Activated CD4-positive, alpha-beta memory T cell treated with anti-CD3 and anti-CD28 coated beads, Interleukin-2, amount 10 ng/mL, durations not matched to agents 7 days and 5 days (primary cell): ENCODE measurements at regions of chr4 and their contacts with region 1.

Region 1: GRCh38 chr4:986879-987623 is at the start of gene IDUA:
- DNase-seq: peak; percentile 87
- H3K4me3 Mint-ChIP-seq: peak within 1 kb of the TSS; percentile 83
- H3K27ac Mint-ChIP-seq: peak within 1 kb of the TSS; percentile 62
- H3K4me1 Mint-ChIP-seq: peaks cover 28% of the 10 kb centered on the region
- H3K27me3 Mint-ChIP-seq: no peaks in the 10 kb centered on the region
- total RNA-seq, gene IDUA: 18.8 to 19.0 TPM

Region 2: GRCh38 chr4:742742-743311 is 244.2 kb before region 1 on chr4:
- CTCF ChIA-PET with region 1: interaction called, 18 read pairs
- POLR2A ChIA-PET with region 1: no interaction called
- DNase-seq: peak; percentile 78
- H3K4me3 Mint-ChIP-seq: no peak overlapping the region
- H3K27ac Mint-ChIP-seq: no peak overlapping the region
- H3K4me1 Mint-ChIP-seq: peaks cover 3% of the 10 kb centered on the region
- H3K27me3 Mint-ChIP-seq: no peaks in the 10 kb centered on the region

Region 3: GRCh38 chr4:856225-856901 is 130.7 kb before region 1 on chr4:
- CTCF ChIA-PET with region 1: no interaction called
- POLR2A ChIA-PET with region 1: no interaction called
- DNase-seq: no peak
- H3K4me3 Mint-ChIP-seq: no peak overlapping the region
- H3K27ac Mint-ChIP-seq: peak overlapping the region; percentile 78
- H3K4me1 Mint-ChIP-seq: peaks cover 8% of the 10 kb centered on the region
- H3K27me3 Mint-ChIP-seq: no peaks in the 10 kb centered on the region

Region 4: GRCh38 chr4:931960-932712 is 54.9 kb before region 1 on chr4 and contains the starts of genes GAK and TMEM175:
- CTCF ChIA-PET with region 1: interaction called, 3 read pairs
- POLR2A ChIA-PET with region 1: interaction called, 14 read pairs
- DNase-seq: peak; percentile 98
- H3K4me3 Mint-ChIP-seq: peak within 1 kb of the TSS; percentile 92
- H3K27ac Mint-ChIP-seq: peak within 1 kb of the TSS; percentile 94
- H3K4me1 Mint-ChIP-seq: peaks cover 47% of the 10 kb centered on the region
- H3K27me3 Mint-ChIP-seq: no peaks in the 10 kb centered on the region
- total RNA-seq, gene GAK: 139 to 156 TPM
- total RNA-seq, gene TMEM175: 24.1 to 28.8 TPM

Region 5: GRCh38 chr4:973431-974397 is 13.3 kb before region 1 on chr4 and contains the start of gene DGKQ:
- CTCF ChIA-PET with region 1: no interaction called
- POLR2A ChIA-PET with region 1: no interaction called
- DNase-seq: peak; percentile 90
- H3K4me3 Mint-ChIP-seq: peak within 1 kb of the TSS; percentile 56
- H3K27ac Mint-ChIP-seq: no peak within 1 kb of the TSS
- H3K4me1 Mint-ChIP-seq: peaks cover 6% of the 10 kb centered on the region
- H3K27me3 Mint-ChIP-seq: no peaks in the 10 kb centered on the region
- total RNA-seq, gene DGKQ: 13.8 to 14.7 TPM

Region 6: GRCh38 chr4:997375-998071 is 10.5 kb after region 1 on chr4:
- CTCF ChIA-PET with region 1: no interaction called
- POLR2A ChIA-PET with region 1: no interaction called
- DNase-seq: no peak
- H3K4me3 Mint-ChIP-seq: no peak overlapping the region
- H3K27ac Mint-ChIP-seq: no peak overlapping the region
- H3K4me1 Mint-ChIP-seq: no peaks in the 10 kb centered on the region
- H3K27me3 Mint-ChIP-seq: peaks cover 35% of the 10 kb centered on the region

Region 7: DNA sequence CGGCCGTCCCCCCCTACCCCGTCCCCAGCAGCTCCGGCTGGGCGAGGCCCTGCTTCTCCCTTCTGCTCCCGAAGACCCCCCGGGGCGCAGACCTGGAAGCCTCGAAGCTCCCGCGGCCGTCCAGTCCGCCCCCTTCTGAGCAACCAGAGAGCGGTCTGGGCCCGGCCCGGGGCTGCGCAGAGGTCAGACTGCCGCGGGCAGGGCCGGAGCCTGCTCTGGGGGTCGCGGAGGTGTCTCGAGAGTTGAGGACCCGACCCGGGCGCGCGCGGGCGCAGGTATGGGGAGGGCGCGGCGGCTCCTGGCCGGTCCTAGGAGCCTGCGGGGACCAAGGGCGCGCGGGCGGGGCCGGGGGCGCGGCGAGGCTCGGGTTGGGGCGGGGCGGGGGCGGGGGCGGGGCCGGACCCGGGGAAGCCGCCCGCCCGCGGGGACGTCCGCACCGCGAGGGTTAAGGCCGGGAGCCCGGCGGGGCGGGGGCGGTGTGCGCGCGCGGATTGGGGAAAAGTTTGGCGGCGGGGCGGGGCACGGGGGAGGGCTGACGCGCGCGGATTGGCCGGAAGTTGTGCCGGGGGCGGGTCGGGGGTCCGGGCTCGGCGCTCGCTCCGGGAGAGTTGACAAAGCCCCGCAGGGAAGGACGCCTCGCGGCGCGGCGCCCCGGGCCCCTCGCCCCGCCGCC is 24.1 kb after region 1 on chr4 and contains the start of gene FGFRL1:
- CTCF ChIA-PET with region 1: interaction called, 5 read pairs
- POLR2A ChIA-PET with region 1: interaction called, 10 read pairs
- DNase-seq: peak; percentile 93
- H3K4me3 Mint-ChIP-seq: peak within 1 kb of the TSS; percentile 76
- H3K27ac Mint-ChIP-seq: peak within 1 kb of the TSS; percentile 82
- H3K4me1 Mint-ChIP-seq: peaks cover 13% of the 10 kb centered on the region
- H3K27me3 Mint-ChIP-seq: peaks cover 27% of the 10 kb centered on the region
- total RNA-seq, gene FGFRL1: 7.1 to 8.9 TPM

Region 8: GRCh38 chr4:1055721-1056590 is 68.9 kb after region 1 on chr4:
- CTCF ChIA-PET with region 1: no interaction called
- POLR2A ChIA-PET with region 1: no interaction called
- DNase-seq: peak; percentile 80
- H3K4me3 Mint-ChIP-seq: peak overlapping the region; percentile 6
- H3K27ac Mint-ChIP-seq: no peak overlapping the region
- H3K4me1 Mint-ChIP-seq: peaks cover 10% of the 10 kb centered on the region
- H3K27me3 Mint-ChIP-seq: peaks cover 9% of the 10 kb centered on the region